Activated CD4-positive, alpha-beta T cell treated with anti-CD3 and anti-CD28 coated beads, Interleukin-2, amount 10 ng/mL, durations not matched to agents 7 days and 5 days (primary cell): ENCODE measurements at regions of chr17 and their contacts with region 1.

Region 1: DNA sequence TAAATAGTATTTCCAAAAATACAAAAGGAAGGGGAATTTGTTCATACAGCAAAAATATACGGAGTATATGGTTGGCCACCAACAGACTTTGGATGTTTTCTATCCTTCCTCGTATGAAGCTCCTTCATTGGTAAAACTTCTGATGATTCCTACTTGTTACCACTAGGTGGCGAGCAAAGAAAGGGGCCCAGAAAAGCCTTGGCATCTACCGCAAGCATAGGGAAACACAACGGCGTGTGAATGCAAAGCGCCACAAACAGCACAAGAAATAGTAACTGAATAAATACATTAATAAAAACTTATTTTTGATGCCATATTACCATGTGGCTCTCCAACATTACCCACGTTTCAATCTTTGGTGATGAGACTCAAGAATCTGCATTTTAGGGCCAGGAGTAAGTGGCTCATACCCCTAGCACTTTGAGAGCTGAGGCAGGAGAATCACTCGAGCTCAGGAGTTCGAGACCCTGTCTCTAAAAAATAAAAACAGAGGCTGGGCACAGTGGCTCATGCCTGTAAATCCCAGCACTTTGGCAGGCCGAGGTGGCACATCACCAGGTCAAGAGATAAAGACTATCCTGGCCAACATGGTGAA is 34.5 kb downstream of the YWHAE start:
- DNase-seq: peak; percentile 76
- H3K4me3 Mint-ChIP-seq: no peak overlapping the region
- H3K27ac Mint-ChIP-seq: peak overlapping the region; percentile 36
- H3K4me1 Mint-ChIP-seq: peaks cover 64% of the 10 kb centered on the region
- H3K27me3 Mint-ChIP-seq: no peaks in the 10 kb centered on the region

Region 2: GRCh38 chr17:1275962-1276736 is 89.4 kb before region 1 on chr17:
- CTCF ChIA-PET with region 1: no interaction called
- POLR2A ChIA-PET with region 1: no interaction called
- DNase-seq: peak; percentile 78
- H3K4me3 Mint-ChIP-seq: no peak overlapping the region
- H3K27ac Mint-ChIP-seq: no peak overlapping the region
- H3K4me1 Mint-ChIP-seq: peaks cover 6% of the 10 kb centered on the region
- H3K27me3 Mint-ChIP-seq: peaks cover 41% of the 10 kb centered on the region

Region 3: GRCh38 chr17:1376061-1376460 is 10.5 kb after region 1 on chr17:
- CTCF ChIA-PET with region 1: interaction called, 18 read pairs
- POLR2A ChIA-PET with region 1: interaction called, 3 read pairs
- DNase-seq: no peak
- H3K4me3 Mint-ChIP-seq: peak overlapping the region; percentile 28
- H3K27ac Mint-ChIP-seq: peak overlapping the region; percentile 60
- H3K4me1 Mint-ChIP-seq: peaks cover 82% of the 10 kb centered on the region
- H3K27me3 Mint-ChIP-seq: no peaks in the 10 kb centered on the region